B cell (primary cell): ENCODE measurements at regions of chr14 and their contacts with region 1.

Region 1: GRCh38 chr14:22589096-22589839 is at the start of gene DAD1:
- DNase-seq: peak; percentile 100
- ATAC-seq: peak; percentile 89
- H3K4me3 ChIP-seq: peak within 1 kb of the TSS; percentile 75 to 84 (median 78)
- H3K4me3 Mint-ChIP-seq: peak within 1 kb of the TSS; percentile 99
- H3K27ac ChIP-seq: peak within 1 kb of the TSS; percentile 97
- H3K27ac Mint-ChIP-seq: peak within 1 kb of the TSS; percentile 96
- H3K4me1 ChIP-seq: peaks cover 30% of the 10 kb centered on the region in 2 donors
- H3K4me1 Mint-ChIP-seq: peaks cover 53% of the 10 kb centered on the region
- H3K27me3 ChIP-seq: no peaks in the 10 kb centered on the region
- H3K27me3 Mint-ChIP-seq: peaks cover 2% of the 10 kb centered on the region
- CTCF ChIP-seq: no peak
- total RNA-seq, gene DAD1: 76.1 and 77.4 TPM in 2 replicates

Region 2: GRCh38 chr14:22112004-22112403 is 477.3 kb before region 1 on chr14:
- CTCF ChIA-PET with region 1: no interaction called
- POLR2A ChIA-PET with region 1: no interaction called
- intact Hi-C with region 1: no loop called
- DNase-seq: no peak
- ATAC-seq: no peak
- H3K4me3 ChIP-seq: no peak overlapping the region
- H3K4me3 Mint-ChIP-seq: no peak overlapping the region
- H3K27ac ChIP-seq: no peak overlapping the region
- H3K27ac Mint-ChIP-seq: no peak overlapping the region
- H3K4me1 ChIP-seq: no peaks in the 10 kb centered on the region
- H3K4me1 Mint-ChIP-seq: no peaks in the 10 kb centered on the region
- H3K27me3 ChIP-seq: peaks cover 0 to 6% (median 0%) of the 10 kb centered on the region in 4 experiments
- H3K27me3 Mint-ChIP-seq: peaks cover 18% of the 10 kb centered on the region
- CTCF ChIP-seq: peak; percentile 50

Region 3: GRCh38 chr14:22671622-22672021 is 82.4 kb after region 1 on chr14:
- CTCF ChIA-PET with region 1: no interaction called
- POLR2A ChIA-PET with region 1: no interaction called
- intact Hi-C with region 1: no loop called
- DNase-seq: no peak
- ATAC-seq: no peak
- H3K4me3 ChIP-seq: no peak overlapping the region
- H3K4me3 Mint-ChIP-seq: no peak overlapping the region
- H3K27ac ChIP-seq: no peak overlapping the region
- H3K27ac Mint-ChIP-seq: no peak overlapping the region
- H3K4me1 ChIP-seq: no peaks in the 10 kb centered on the region
- H3K4me1 Mint-ChIP-seq: no peaks in the 10 kb centered on the region
- H3K27me3 ChIP-seq: no peaks in the 10 kb centered on the region
- H3K27me3 Mint-ChIP-seq: peaks cover 5% of the 10 kb centered on the region
- CTCF ChIP-seq: no peak

Region 4: DNA sequence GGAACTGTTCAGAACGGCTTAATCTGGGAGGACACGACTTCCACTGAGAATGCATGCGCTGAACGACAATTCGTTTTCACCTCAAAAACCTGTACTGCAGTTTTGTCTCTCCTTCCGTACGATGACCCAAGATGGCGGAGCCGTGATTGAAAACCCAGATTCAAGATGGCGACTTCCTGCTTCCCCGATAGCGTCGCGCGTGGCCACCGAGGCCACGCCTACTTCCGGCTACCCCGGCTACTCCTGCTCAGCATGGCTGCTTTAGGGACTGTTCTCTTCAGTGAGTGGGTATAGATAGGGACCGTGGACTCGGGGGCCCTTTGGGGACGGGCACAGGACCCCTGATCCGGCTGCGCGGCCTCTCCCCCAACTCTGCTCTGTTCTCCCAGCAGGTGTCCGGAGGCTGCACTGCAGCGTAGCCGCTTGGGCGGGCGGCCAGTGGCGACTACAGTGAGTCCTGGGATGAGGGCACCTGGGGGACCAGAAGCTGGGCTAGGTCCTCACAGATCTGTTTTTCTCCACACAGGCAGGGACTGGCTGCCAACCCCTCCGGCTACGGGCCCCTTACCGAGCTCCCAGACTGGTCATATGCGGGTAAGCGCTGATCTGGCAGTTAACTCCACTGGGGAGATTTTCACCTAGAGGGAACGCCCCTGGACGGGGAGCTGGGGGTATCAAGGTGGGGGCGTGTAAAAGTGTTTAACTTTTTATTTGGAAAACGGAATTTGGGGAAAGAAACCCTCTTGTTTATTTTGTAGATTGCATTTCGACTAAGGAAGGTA is 240.6 kb after region 1 on chr14 and contains the start of gene MRPL52:
- CTCF ChIA-PET with region 1: interaction called, 5 read pairs
- POLR2A ChIA-PET with region 1: no interaction called
- intact Hi-C with region 1: loop called (anchors 1 kb)
- DNase-seq: peak; percentile 95
- ATAC-seq: peak; percentile 94
- H3K4me3 ChIP-seq: peak within 1 kb of the TSS; percentile 68 to 92 (median 84)
- H3K4me3 Mint-ChIP-seq: peak within 1 kb of the TSS; percentile 84
- H3K27ac ChIP-seq: peak within 1 kb of the TSS; percentile 87 to 91
- H3K27ac Mint-ChIP-seq: peak within 1 kb of the TSS; percentile 93
- H3K4me1 ChIP-seq: peaks cover 18 to 22% of the 10 kb centered on the region in 2 donors
- H3K4me1 Mint-ChIP-seq: peaks cover 30% of the 10 kb centered on the region
- H3K27me3 ChIP-seq: no peaks in the 10 kb centered on the region
- H3K27me3 Mint-ChIP-seq: no peaks in the 10 kb centered on the region
- CTCF ChIP-seq: no peak
- total RNA-seq, gene MRPL52: 91.6 and 93.0 TPM in 2 replicates

Region 5: DNA sequence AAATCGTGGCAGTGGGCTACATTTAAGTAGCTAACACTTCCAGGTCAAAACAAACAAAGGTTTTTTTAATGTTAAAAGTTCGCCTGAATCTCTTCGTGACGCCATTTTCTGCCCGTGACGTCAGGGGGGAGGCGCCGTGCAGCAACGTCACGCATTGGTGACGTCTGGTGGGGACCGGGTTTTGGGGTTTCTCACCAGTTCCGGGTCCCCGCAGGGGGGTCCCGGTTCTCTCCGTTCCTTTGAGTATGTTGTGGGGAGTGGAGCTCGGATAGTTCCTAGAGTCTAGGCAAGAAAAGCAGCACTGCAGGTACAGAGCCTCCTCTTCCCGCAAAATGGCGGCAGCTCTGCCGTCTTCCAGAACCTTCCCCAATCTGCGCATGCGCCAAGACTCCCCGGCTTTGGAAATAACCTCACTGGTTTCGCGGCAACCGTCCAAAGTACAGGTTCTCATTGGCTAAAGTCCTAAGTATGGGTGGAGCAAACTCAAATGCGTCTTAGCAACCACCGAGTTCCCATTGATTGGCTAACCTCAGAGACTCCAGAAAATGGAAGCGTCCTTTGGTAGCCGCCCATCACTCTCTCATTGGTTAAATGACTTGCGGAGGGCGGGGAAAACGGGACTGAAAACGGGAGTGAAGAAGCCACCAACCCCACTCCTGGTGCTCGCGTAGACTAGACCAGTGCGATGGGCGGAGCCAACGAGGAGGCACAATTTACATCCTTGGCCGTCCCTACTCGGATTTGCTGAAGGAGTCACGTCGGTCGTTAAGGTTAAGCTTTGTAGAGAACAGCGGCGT is 329.7 kb after region 1 on chr14 and contains the start of gene RBM23:
- CTCF ChIA-PET with region 1: no interaction called
- POLR2A ChIA-PET with region 1: interaction called, 4 read pairs
- intact Hi-C with region 1: loop called (anchors 1 kb)
- DNase-seq: peak; percentile 100
- ATAC-seq: peak; percentile 87
- H3K4me3 ChIP-seq: peak within 1 kb of the TSS; percentile 72 to 98 (median 96)
- H3K4me3 Mint-ChIP-seq: peak within 1 kb of the TSS; percentile 93
- H3K27ac ChIP-seq: peak within 1 kb of the TSS; percentile 98 to 99
- H3K27ac Mint-ChIP-seq: peak within 1 kb of the TSS; percentile 99
- H3K4me1 ChIP-seq: peaks cover 16 to 28% of the 10 kb centered on the region in 2 donors
- H3K4me1 Mint-ChIP-seq: peaks cover 38% of the 10 kb centered on the region
- H3K27me3 ChIP-seq: no peaks in the 10 kb centered on the region
- H3K27me3 Mint-ChIP-seq: no peaks in the 10 kb centered on the region
- CTCF ChIP-seq: no peak
- total RNA-seq, gene RBM23: 165 and 188 TPM in 2 replicates

Region 6: DNA sequence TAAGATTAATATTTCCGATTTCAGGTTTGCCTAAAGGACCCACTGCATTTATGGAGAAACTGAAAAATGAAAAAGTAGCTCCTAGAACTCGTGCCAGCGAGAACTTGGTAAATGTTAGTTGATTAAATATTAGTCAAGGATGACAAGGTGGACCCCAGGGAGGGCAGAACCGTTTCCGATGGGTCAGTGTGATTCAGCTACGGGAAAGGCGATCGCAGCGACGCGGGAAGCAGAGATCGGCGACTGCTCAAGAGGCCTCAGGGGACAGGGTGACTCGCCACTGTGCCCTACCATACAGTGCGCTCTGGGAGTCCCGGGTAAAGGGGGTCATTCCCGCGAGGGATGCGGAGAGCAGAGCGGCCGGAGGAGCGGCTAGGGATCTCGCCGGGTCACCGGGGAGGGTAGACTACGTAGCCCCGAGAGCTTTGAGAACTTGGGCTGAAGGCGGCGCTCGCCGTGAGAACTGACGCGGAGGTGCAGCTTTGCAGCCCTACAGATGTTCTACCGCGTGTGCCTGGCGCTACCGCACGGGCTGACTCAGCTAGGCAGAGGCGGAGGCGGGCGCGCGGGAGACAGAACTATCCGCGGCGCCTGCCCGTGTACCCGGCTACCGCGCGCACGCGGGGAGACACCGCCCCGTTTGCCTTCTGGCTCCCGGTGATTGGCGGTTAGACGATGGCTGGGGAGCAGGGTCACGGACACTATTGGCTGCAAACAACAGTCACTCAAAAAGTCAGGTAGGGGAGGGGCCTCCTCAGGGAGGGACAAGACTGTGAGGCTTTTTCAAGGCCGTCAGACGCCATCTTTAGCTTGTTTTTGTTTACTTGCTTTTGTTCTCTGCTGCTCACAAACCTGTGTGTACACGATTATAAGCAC is 417.5 kb after region 1 on chr14:
- CTCF ChIA-PET with region 1: interaction called, 6 read pairs
- POLR2A ChIA-PET with region 1: no interaction called
- intact Hi-C with region 1: loop called (anchors 1 kb)
- DNase-seq: peak; percentile 98
- ATAC-seq: peak; percentile 91
- H3K4me3 ChIP-seq: peak overlapping the region; percentile 70 to 95 (median 85)
- H3K4me3 Mint-ChIP-seq: peak overlapping the region; percentile 99
- H3K27ac ChIP-seq: peak overlapping the region; percentile 75 to 88
- H3K27ac Mint-ChIP-seq: peak overlapping the region; percentile 98
- H3K4me1 ChIP-seq: peaks cover 24 to 32% of the 10 kb centered on the region in 2 donors
- H3K4me1 Mint-ChIP-seq: peaks cover 42% of the 10 kb centered on the region
- H3K27me3 ChIP-seq: no peaks in the 10 kb centered on the region
- H3K27me3 Mint-ChIP-seq: no peaks in the 10 kb centered on the region
- CTCF ChIP-seq: no peak

Region 7: DNA sequence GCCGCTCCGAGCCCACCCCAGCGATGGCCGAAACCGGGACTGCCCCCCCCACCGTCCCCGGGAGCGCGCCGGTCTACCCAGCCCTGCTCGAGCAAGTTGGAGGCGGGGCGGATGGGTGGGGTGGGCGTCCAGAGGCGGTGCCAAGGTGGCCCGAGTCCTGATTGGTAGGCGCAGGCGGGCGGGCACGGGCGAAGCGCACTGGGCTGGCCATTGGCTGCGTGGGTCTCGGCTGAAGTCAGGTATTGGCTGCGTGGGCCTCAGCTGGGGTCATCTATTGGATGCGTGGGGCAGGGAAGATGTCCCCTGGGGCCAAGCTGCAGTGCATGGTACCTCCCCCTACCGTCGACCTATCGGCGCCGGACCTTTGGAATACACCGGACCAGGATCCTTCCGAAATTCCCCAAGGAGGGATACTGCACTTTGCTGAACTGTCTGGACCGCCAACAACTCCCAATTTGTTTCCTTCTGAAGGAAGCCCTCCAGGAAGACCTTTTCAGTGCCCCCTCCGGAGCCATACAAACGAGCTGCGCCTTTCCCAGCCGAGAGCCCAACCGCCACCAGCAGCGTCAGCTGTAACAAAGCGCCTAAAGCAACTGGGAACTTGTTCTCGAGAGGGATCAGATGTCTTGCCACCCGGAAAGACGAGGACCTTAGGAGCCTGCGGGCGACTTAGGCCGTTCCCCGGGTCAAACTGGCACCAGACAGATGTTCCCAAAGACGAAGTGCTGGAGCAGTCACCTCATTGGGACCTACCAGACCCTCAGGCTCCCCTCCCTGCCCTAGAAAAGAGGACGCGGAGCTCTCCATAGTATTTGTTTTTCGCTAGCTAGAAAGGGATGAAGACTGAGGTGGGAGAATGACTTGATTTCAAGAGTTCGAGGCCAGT is 697.0 kb after region 1 on chr14 and contains the start of gene HOMEZ:
- CTCF ChIA-PET with region 1: no interaction called
- POLR2A ChIA-PET with region 1: no interaction called
- intact Hi-C with region 1: loop called (anchors 1 kb)
- DNase-seq: peak; percentile 97
- ATAC-seq: peak; percentile 97
- H3K4me3 ChIP-seq: peak within 1 kb of the TSS; percentile 56 to 90 (median 83)
- H3K4me3 Mint-ChIP-seq: peak within 1 kb of the TSS; percentile 98
- H3K27ac ChIP-seq: peak within 1 kb of the TSS; percentile 49 to 83
- H3K27ac Mint-ChIP-seq: peak within 1 kb of the TSS; percentile 93
- H3K4me1 ChIP-seq: peaks cover 13 to 17% of the 10 kb centered on the region in 2 donors
- H3K4me1 Mint-ChIP-seq: peaks cover 23% of the 10 kb centered on the region
- H3K27me3 ChIP-seq: no peaks in the 10 kb centered on the region
- H3K27me3 Mint-ChIP-seq: no peaks in the 10 kb centered on the region
- CTCF ChIP-seq: no peak
- total RNA-seq, gene HOMEZ: 15.5 TPM in 2 replicates